Dendritic cell treated with granulocyte-macrophage colony-stimulating factor and Interleukin-4, amounts not matched to agents 40 ng/mL and 50 ng/mL, for 4 days (primary cell): ENCODE measurements at regions of chr5 and their contacts with region 1.

Region 1: DNA sequence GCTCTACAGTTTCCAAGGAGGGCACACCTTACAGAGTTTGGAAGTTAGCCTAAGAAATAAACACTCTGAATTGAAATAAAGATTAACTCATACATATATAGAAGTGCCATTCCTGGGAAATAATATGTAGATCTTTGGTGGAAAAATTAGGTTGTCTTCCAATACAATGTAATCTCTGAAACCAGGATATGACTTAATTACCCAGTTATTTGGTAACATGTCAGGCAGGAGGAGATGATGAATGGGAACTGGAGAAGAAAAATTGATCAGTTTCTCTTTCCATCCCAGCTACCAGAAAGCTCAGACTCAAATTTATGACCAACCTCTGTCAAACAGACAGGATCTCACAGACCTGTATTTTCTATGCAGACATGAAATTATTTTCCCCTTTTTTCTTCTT is 215.2 kb upstream of the SNX2 start:
- H3K4me3 Mint-ChIP-seq: no peak overlapping the region
- H3K27ac Mint-ChIP-seq: no peak overlapping the region
- H3K4me1 Mint-ChIP-seq: no peaks in the 10 kb centered on the region
- H3K27me3 Mint-ChIP-seq: no peaks in the 10 kb centered on the region

Region 2: DNA sequence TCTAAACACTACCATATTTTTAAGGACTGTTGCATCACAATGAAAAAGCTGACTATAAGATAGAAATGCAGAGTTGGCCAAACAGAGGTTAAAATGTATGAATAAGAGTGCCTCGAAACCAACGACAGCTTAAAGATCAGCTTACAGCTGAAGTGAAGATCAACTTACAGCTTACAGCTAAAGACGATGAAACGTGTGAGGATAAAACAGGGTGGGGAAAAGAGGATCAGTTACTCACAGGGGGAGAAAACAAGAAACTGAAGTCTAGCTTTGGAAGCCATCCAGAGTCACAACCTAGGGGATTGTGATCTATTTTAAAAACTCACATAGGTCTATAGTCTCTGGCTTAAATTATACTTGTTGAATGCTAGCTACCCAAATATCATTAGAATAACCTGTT is 27.6 kb before region 1 on chr5:
- intact Hi-C with region 1: loop called (anchors 2 kb)
- H3K4me3 Mint-ChIP-seq: no peak overlapping the region
- H3K27ac Mint-ChIP-seq: no peak overlapping the region
- H3K4me1 Mint-ChIP-seq: no peaks in the 10 kb centered on the region
- H3K27me3 Mint-ChIP-seq: no peaks in the 10 kb centered on the region

Region 3: GRCh38 chr5:122576256-122577016 is 16.8 kb after region 1 on chr5:
- intact Hi-C with region 1: no loop called
- H3K4me3 Mint-ChIP-seq: no peak overlapping the region
- H3K27ac Mint-ChIP-seq: no peak overlapping the region
- H3K4me1 Mint-ChIP-seq: no peaks in the 10 kb centered on the region
- H3K27me3 Mint-ChIP-seq: no peaks in the 10 kb centered on the region